CD14-positive monocyte (primary cell): ENCODE measurements at regions of chr17 and their contacts with region 1.

Region 1: DNA sequence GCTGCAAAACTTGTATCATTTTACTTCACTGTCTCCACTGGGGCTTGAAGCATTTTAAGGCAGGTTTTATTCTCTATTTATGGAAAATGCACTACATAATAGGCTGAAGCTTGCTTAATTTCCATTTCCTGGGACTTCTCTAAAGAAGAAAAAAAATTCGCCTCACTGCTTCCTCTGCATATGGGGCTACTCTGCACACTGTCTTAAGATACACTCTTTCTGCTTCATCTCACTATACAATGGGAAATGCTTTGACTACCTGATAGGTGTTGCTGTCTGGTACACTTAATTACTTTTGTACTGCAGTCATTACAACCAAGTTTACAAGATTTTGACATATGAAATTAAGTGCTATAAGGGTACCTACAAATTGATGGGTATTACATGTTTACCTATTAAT is 466.0 kb downstream of the KCNJ18 start:
- DNase-seq: no peak
- H3K4me3 ChIP-seq: no peak overlapping the region
- H3K4me3 Mint-ChIP-seq: no peak overlapping the region
- H3K27ac ChIP-seq: no peak overlapping the region
- H3K27ac Mint-ChIP-seq: no peak overlapping the region
- H3K4me1 ChIP-seq: no peaks in the 10 kb centered on the region
- H3K4me1 Mint-ChIP-seq: no peaks in the 10 kb centered on the region
- H3K27me3 ChIP-seq: no peaks in the 10 kb centered on the region
- H3K27me3 Mint-ChIP-seq: no peaks in the 10 kb centered on the region
- CTCF ChIP-seq: no peak

Region 2: DNA sequence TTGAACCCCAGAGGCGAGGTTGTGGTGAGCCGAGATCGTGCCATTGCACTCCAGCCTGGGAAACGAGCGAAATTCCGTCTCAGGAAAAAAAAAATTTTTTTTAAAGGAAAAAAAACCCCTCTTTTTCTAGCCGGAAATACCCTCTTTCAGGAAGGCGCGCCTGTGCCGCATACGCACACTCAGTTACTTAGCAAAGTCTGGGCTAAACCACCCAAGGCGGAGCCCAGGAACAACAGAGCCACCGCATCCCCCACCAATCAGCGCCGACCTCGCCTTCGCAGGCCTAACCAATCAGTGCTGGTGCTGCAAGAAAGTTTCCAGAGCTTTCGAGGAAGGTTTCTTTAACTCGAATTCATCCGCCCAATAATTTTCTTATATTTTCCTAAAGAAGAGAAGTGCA is 44.3 kb after region 1 on chr17:
- intact Hi-C with region 1: no loop called
- DNase-seq: no peak
- H3K4me3 ChIP-seq: no peak overlapping the region
- H3K4me3 Mint-ChIP-seq: no peak overlapping the region
- H3K27ac ChIP-seq: no peak overlapping the region
- H3K27ac Mint-ChIP-seq: no peak overlapping the region
- H3K4me1 ChIP-seq: no peaks in the 10 kb centered on the region
- H3K4me1 Mint-ChIP-seq: no peaks in the 10 kb centered on the region
- H3K27me3 ChIP-seq: no peaks in the 10 kb centered on the region
- H3K27me3 Mint-ChIP-seq: no peaks in the 10 kb centered on the region
- CTCF ChIP-seq: no peak

Region 3: DNA sequence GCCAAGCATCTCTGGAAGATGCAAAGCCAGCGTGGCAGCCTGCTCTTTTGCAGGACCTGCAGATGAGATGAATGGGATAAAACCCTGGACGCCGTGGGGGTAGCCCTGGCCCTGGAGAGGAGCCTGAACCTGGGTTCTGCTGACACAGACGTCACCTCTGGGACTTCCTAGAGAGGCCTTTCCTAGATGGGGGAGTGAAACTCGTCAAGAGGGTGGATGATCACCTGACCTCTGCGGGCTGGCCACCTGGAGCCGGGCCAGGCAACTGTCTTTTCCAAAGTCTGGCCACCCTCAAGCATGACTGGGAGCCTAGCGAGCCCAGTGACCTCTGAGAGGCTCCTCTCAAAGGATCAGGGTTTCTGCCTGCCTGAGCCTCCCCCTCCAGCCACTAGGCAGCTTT is 63.0 kb after region 1 on chr17:
- intact Hi-C with region 1: loop called in 1 of 2 experiments (anchors 10 kb)
- DNase-seq: no peak
- H3K4me3 ChIP-seq: no peak overlapping the region
- H3K4me3 Mint-ChIP-seq: no peak overlapping the region
- H3K27ac ChIP-seq: no peak overlapping the region
- H3K27ac Mint-ChIP-seq: no peak overlapping the region
- H3K4me1 ChIP-seq: no peaks in the 10 kb centered on the region
- H3K4me1 Mint-ChIP-seq: no peaks in the 10 kb centered on the region
- H3K27me3 ChIP-seq: no peaks in the 10 kb centered on the region
- H3K27me3 Mint-ChIP-seq: peaks cover 0 to 1% (median 0%) of the 10 kb centered on the region in 3 donors
- CTCF ChIP-seq: no peak